ENCODE measurements at regions of chr1 and their contacts with region 1.

Region 1: DNA sequence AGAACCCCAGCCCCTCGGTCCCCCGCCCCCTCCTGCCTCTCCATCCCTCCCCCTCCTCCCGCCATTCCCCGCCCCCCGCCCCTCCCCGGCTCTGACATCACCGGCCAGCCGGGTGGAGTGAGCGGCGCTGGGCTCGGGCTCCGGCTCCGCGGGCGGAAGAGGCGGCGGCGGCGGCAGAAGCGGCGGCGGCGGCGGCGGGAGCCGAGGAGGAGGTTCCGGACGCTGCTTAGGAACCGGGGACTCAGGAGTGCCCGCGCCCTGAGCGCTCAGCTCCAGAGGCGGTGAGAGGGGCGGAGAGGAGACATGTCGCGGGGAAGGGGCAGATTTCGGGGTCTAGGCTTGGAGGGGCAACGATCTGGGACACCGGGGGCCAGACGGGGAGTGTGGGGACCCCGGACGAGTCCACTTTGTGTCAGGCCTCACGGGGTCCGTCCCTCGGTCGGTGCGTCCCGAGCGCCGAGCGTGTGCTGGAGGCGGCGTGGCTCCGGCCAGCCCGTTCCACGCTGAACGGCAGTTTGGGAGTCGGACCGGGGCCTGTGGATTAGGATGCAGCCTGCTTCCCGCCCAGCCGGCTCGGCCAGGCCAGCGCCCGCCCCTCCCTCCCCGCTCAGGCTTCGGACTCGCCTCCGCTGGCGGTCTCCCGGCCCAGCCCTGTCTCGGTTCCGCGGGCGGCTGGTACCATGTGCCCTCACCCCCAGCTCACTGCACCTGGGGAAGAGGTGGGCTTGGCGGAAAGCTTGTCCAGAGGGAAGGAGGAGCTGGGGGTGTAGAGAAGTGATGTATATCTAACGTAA is at the start of gene PEA15:
- DNase-seq: no peak
- H3K4me3 ChIP-seq: peak within 1 kb of the TSS; percentile 95 to 98
- H3K27ac ChIP-seq: peak within 1 kb of the TSS; percentile 96
- H3K4me1 ChIP-seq: peaks cover 56% of the 10 kb centered on the region
- H3K27me3 ChIP-seq: no peaks in the 10 kb centered on the region
- CTCF ChIP-seq: no peak
- POLR2A ChIP-seq: peak in 1 of 2 donors; percentile 90
- total RNA-seq, gene PEA15: 89.1 TPM

Region 2: DNA sequence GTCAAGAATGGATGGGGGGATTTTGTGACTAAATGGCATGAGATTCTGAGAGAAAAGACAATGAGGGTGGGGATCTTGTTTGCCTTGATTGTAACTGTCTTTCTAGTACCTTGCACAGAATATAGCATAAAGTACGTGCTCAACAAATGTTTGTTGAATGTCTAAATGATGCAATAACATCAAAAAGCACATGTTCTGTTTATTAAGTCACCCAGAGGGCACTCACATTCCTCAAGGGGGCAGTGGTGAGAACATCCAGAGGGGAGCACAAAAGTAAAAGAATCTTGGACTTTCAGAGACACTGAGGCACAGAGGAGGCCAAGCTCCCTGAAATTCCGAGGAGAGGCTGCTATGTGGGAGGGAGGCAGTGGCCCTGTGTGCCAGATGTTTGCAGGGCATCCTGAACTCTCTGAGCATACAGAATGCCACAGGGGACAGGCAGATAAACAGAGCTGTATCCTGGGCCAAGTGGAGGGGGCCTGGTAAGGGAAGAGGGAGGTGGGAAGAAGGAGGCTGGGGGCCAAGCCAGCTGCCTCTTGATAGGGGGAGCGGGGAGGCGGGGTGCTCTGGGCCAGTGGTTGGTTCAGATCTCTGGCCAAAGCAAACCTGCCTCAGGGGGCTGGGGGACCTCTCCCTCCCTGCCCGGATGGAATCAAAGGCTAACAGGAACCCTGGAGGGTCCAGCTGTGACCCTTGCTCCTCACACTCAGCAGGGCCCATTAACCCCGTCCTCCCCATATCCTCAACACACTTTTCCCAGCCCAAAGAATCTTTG is 96.4 kb before region 1 on chr1:
- intact Hi-C with region 1: loop called (anchors 5 kb)
- DNase-seq: no peak
- H3K4me3 ChIP-seq: no peak overlapping the region
- H3K27ac ChIP-seq: no peak overlapping the region
- H3K4me1 ChIP-seq: no peaks in the 10 kb centered on the region
- H3K27me3 ChIP-seq: no peaks in the 10 kb centered on the region
- CTCF ChIP-seq: no peak
- POLR2A ChIP-seq: no peak

Region 3: GRCh38 chr1:160161965-160162705 is 43.3 kb before region 1 on chr1:
- intact Hi-C with region 1: no loop called
- DNase-seq: no peak
- H3K4me3 ChIP-seq: no peak overlapping the region
- H3K27ac ChIP-seq: no peak overlapping the region
- H3K4me1 ChIP-seq: no peaks in the 10 kb centered on the region
- H3K27me3 ChIP-seq: no peaks in the 10 kb centered on the region
- CTCF ChIP-seq: no peak
- POLR2A ChIP-seq: no peak

Region 4: GRCh38 chr1:160251687-160252526 is 46.5 kb after region 1 on chr1:
- intact Hi-C with region 1: loop called (anchors 10 kb)
- DNase-seq: no peak
- H3K4me3 ChIP-seq: no peak overlapping the region
- H3K27ac ChIP-seq: peak overlapping the region; percentile 27
- H3K4me1 ChIP-seq: peaks cover 25% of the 10 kb centered on the region
- H3K27me3 ChIP-seq: no peaks in the 10 kb centered on the region
- CTCF ChIP-seq: peak in 2 of 3 experiments; percentile 65 to 84
- POLR2A ChIP-seq: no peak

Measured in vagina (tissue), 2 donors.